ENCODE measurements at regions of chr10 and their contacts with region 1.

Region 1: GRCh38 chr10:102514487-102515311 is 10.9 kb downstream of the SUFU start:
- DNase-seq: no peak
- ATAC-seq: no peak
- H3K4me3 Mint-ChIP-seq: no peak overlapping the region
- H3K27ac Mint-ChIP-seq: no peak overlapping the region
- H3K4me1 Mint-ChIP-seq: peaks cover 11% of the 10 kb centered on the region
- H3K27me3 Mint-ChIP-seq: no peaks in the 10 kb centered on the region

Region 2: DNA sequence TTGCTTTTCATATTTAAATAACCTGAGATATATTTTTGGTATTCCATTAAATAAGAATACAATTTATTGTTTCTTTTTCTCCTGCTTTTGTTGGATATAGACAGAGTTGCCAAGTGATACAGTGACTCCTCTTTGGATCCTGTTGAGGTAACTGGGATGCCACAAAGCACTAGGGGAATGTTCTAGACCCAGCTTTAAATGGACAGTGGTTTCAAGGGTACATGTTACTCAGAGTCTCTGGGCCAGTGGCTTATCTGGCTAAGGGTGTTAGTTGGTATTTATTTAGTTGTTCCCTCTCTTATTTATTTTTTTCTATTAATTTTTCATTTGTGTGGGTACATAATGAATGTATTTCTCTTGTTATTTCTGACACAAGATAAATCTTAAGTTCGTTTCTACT is 260.3 kb before region 1 on chr10:
- CTCF ChIA-PET with region 1: no interaction called
- POLR2A ChIA-PET with region 1: interaction called, 10 read pairs
- intact Hi-C with region 1: no loop called
- DNase-seq: no peak
- ATAC-seq: no peak
- H3K4me3 Mint-ChIP-seq: no peak overlapping the region
- H3K27ac Mint-ChIP-seq: no peak overlapping the region
- H3K4me1 Mint-ChIP-seq: peaks cover 19% of the 10 kb centered on the region
- H3K27me3 Mint-ChIP-seq: no peaks in the 10 kb centered on the region

Region 3: GRCh38 chr10:102426803-102427287 is 87.9 kb before region 1 on chr10:
- CTCF ChIA-PET with region 1: no interaction called
- POLR2A ChIA-PET with region 1: no interaction called
- intact Hi-C with region 1: no loop called
- DNase-seq: no peak
- ATAC-seq: no peak
- H3K4me3 Mint-ChIP-seq: no peak overlapping the region
- H3K27ac Mint-ChIP-seq: peak overlapping the region; percentile 60
- H3K4me1 Mint-ChIP-seq: peaks cover 28% of the 10 kb centered on the region
- H3K27me3 Mint-ChIP-seq: no peaks in the 10 kb centered on the region

Region 4: DNA sequence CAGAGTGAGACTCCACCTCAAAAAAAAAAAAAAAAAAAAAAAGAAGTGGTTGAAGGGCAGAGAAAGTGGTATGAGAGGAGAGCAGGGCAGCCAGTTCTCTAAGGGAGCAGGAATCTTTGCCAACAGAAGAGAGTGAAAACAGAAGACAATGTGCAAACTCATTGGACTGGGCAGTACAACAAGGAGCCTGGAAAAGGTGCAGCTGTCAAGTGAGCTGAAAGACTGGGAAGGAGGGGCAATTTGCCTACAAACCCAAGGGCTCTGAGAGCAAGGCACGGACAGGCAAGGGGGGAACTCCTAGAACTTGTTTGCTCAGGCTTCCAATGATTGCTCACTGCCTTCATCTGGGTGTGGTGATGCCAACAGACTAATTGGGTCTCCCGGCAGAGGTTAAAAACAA is 21.7 kb before region 1 on chr10:
- CTCF ChIA-PET with region 1: no interaction called
- POLR2A ChIA-PET with region 1: no interaction called
- intact Hi-C with region 1: no loop called
- DNase-seq: no peak
- ATAC-seq: no peak
- H3K4me3 Mint-ChIP-seq: no peak overlapping the region
- H3K27ac Mint-ChIP-seq: no peak overlapping the region
- H3K4me1 Mint-ChIP-seq: peaks cover 10% of the 10 kb centered on the region
- H3K27me3 Mint-ChIP-seq: no peaks in the 10 kb centered on the region

Region 5: DNA sequence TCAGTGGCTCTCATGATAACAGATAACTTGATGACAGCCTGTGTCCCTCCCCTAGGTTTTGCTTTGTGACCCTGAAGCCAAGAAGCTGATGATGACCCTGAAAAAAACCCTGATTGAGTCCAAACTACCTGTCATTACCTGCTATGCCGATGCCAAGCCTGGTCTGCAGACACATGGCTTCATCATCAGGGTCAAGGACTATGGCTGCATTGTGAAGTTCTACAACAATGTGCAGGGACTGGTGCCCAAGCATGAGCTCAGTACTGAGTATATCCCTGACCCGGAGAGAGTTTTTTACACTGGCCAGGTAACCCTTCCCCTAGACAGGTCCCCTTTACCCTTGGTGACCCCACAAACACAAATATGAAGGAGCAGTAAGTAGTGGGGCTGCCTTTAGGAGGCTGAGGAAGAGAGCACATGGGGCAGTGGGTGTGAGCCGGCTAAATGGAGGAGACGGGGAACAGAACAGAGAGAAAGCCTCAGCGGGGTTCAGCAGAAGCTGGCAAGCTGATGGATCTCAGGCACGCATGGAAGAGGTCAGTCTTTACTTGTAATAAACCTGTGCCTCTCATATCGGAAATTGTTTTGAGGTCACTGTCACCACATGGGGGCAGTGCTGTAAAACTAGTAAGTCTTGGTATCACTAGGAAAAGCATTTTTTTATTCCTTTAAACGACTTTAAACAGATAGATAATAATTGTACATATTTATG is 901.9 kb after region 1 on chr10:
- CTCF ChIA-PET with region 1: no interaction called
- POLR2A ChIA-PET with region 1: no interaction called
- intact Hi-C with region 1: no loop called
- DNase-seq: peak; percentile 70
- ATAC-seq: peak; percentile 55
- H3K4me3 Mint-ChIP-seq: no peak overlapping the region
- H3K27ac Mint-ChIP-seq: no peak overlapping the region
- H3K4me1 Mint-ChIP-seq: no peaks in the 10 kb centered on the region
- H3K27me3 Mint-ChIP-seq: no peaks in the 10 kb centered on the region